ENCODE measurements at regions of chr3 and their contacts with region 1.

Region 1: GRCh38 chr3:69791919-69792399 is 52.7 kb downstream of the MITF start:
- DNase-seq: no peak
- H3K4me3 ChIP-seq: no peak overlapping the region
- H3K27ac ChIP-seq: peak overlapping the region; percentile 0 to 45
- H3K4me1 ChIP-seq: peaks cover 0 to 49% (median 21%) of the 10 kb centered on the region in 4 donors
- H3K27me3 ChIP-seq: no peaks in the 10 kb centered on the region
- CTCF ChIP-seq: peak; percentile 54 to 67

Region 2: GRCh38 chr3:69686056-69686455 is 105.9 kb before region 1 on chr3:
- intact Hi-C with region 1: loop called (anchors 5 kb)
- DNase-seq: no peak
- H3K4me3 ChIP-seq: no peak overlapping the region
- H3K27ac ChIP-seq: no peak overlapping the region
- H3K4me1 ChIP-seq: peaks cover 0 to 17% (median 2%) of the 10 kb centered on the region in 4 donors
- H3K27me3 ChIP-seq: no peaks in the 10 kb centered on the region
- CTCF ChIP-seq: no peak

Region 3: GRCh38 chr3:70067860-70068521 is 276.0 kb after region 1 on chr3:
- intact Hi-C with region 1: no loop called
- DNase-seq: no peak
- H3K4me3 ChIP-seq: peak overlapping the region in 1 of 2 donors; percentile 5
- H3K27ac ChIP-seq: peak overlapping the region; percentile 84 to 89
- H3K4me1 ChIP-seq: peaks cover 0 to 85% (median 27%) of the 10 kb centered on the region in 4 donors
- H3K27me3 ChIP-seq: no peaks in the 10 kb centered on the region
- CTCF ChIP-seq: no peak

Measured in tibial artery (tissue), 4 donors.